ENCODE measurements at regions of chr10 and their contacts with region 1.

Region 1: DNA sequence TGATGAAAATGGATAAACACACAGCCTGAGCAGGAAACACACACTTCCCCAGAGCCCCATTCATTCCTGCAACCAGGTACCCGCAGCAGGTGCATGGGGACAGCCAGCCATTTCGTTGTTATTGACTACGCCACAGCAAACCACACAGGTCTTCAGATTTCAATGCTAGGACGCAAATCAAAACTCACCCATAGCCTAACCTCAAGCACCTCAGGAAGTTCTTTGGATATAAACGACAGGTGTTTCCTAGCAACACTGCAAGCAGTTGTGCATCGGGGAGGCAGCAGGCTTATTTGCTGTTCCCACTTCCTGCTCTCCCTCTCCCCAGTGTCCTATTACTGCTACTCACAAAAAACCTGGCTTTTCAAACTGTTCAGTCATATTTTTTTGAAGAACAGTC is 176.5 kb upstream of the FRMD4A start:
- DNase-seq: peak; percentile 76
- H3K4me3 Mint-ChIP-seq: no peak overlapping the region
- H3K27ac Mint-ChIP-seq: peak overlapping the region; percentile 59
- H3K4me1 Mint-ChIP-seq: peaks cover 42% of the 10 kb centered on the region
- H3K27me3 Mint-ChIP-seq: no peaks in the 10 kb centered on the region

Region 2: DNA sequence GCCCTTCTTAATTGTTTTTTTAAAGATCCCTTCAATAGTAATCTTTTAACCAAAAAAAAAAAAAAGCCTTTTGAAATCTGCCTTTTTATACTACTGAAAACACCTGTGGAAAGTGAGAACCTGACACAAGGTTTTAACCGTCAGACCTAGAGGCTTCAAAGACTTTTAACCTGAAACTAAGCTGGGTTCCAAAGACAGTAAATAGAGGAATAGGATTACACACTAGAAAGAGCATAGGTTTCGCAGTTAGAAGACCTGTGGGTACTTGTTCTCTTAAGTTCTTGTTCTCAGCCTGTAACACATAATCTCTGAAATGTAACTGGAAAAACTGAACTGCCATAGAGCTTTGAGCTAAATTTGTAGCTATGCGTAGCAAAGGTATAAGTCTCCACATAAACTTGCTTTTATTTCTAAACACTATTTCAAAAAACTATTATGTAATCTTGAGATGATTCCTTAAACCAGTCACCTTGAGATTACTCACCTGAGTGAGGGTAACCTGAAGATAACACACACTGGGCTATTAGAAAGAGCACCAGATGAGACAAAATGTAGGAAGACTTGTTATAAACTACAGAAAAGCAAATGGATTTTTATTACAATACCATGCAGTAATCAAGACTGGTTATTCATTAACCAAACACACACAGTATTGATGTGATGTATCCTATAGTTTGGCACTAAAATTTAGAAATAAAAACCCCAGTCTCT is 20.1 kb after region 1 on chr10:
- CTCF ChIA-PET with region 1: no interaction called
- intact Hi-C with region 1: loop called (anchors 1 kb)
- DNase-seq: no peak
- H3K4me3 Mint-ChIP-seq: no peak overlapping the region
- H3K27ac Mint-ChIP-seq: peak overlapping the region; percentile 81
- H3K4me1 Mint-ChIP-seq: peaks cover 78% of the 10 kb centered on the region
- H3K27me3 Mint-ChIP-seq: no peaks in the 10 kb centered on the region

Region 3: DNA sequence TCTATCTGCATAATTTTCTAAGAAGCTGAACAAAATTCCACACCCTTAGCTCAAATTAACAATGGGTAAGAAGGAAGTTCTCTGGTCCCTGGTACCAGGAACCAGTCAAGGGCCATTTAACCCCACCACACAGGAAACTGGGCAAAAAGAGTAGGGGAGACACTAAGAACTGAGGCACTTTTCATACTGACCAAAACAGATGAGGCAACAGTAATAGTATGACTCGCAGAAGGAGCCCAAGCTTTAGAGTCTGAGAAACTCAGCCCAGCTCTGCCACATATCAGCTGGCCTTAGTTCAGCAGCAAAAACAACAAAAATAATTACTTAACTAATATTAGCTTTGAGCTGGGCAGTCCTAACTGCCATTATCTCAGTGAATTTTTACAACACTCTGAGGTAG is 46.3 kb after region 1 on chr10:
- CTCF ChIA-PET with region 1: interaction called, 3 read pairs
- intact Hi-C with region 1: loop called (anchors 2 kb)
- DNase-seq: no peak
- H3K4me3 Mint-ChIP-seq: no peak overlapping the region
- H3K27ac Mint-ChIP-seq: peak overlapping the region; percentile 43
- H3K4me1 Mint-ChIP-seq: peaks cover 89% of the 10 kb centered on the region
- H3K27me3 Mint-ChIP-seq: no peaks in the 10 kb centered on the region